ENCODE measurements at regions of chr1 and their contacts with region 1.

Region 1: GRCh38 chr1:173914366-173914871 is 2.7 kb downstream of the SERPINC1 start:
- DNase-seq: peak; percentile 69 to 71
- ATAC-seq: peak; percentile 85 to 94
- H3K4me3 ChIP-seq: no peak overlapping the region
- H3K27ac ChIP-seq: no peak overlapping the region
- H3K4me1 ChIP-seq: no peaks in the 10 kb centered on the region
- CTCF ChIP-seq: peak; percentile 65
- EP300 ChIP-seq: no peak
- POLR2A ChIP-seq: no peak
- RAD21 ChIP-seq: peak; percentile 23 to 54; a peak in 3 of 5 replicates

Region 2: GRCh38 chr1:173818459-173818858 is 96.0 kb before region 1 on chr1:
- CTCF ChIA-PET with region 1: no interaction called
- POLR2A ChIA-PET with region 1: no interaction called
- DNase-seq: no peak
- ATAC-seq: no peak
- H3K4me3 ChIP-seq: no peak overlapping the region
- H3K27ac ChIP-seq: no peak overlapping the region
- H3K4me1 ChIP-seq: peaks cover 8% of the 10 kb centered on the region; the same call in 1 of the 3 replicates
- CTCF ChIP-seq: no peak
- EP300 ChIP-seq: no peak
- POLR2A ChIP-seq: no peak
- RAD21 ChIP-seq: no peak

Region 3: DNA sequence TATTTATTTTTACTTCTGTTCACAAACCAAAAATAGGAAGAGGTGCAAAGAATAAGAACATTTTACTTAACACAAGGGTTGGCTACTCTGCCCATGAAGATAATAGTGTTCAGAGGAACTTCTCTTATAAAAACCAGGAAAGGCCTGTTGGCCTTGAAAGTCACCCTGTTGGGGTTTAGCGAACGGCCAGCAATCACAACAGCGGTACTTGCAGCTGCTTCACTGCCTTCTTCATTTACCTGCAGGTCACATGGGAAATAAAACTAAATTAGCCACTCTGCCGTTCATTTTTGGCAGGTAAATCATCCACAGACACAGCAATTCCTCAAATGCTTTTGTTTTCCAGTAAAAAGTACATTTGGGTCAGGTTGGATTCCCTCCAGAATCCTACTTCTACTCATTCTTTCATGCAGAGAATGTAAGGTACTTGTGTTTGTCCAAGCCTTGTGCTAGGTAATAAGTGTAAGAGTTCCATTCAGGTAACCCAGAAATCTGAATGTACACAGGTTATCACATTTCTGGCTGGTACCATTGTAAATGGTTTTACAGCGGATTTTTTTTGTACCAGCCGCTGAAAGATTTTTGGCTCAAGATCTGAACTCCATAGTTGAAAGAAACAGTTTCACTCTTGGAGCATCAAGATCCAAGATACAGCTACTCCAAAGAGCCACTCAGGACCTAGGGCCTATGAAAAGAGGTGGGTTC is 10.4 kb before region 1 on chr1:
- CTCF ChIA-PET with region 1: interaction called, 14 read pairs
- POLR2A ChIA-PET with region 1: no interaction called
- DNase-seq: no peak
- ATAC-seq: no peak
- H3K4me3 ChIP-seq: no peak overlapping the region
- H3K27ac ChIP-seq: no peak overlapping the region
- H3K4me1 ChIP-seq: no peaks in the 10 kb centered on the region
- CTCF ChIP-seq: no peak
- EP300 ChIP-seq: no peak
- POLR2A ChIP-seq: no peak
- RAD21 ChIP-seq: no peak

Region 4: DNA sequence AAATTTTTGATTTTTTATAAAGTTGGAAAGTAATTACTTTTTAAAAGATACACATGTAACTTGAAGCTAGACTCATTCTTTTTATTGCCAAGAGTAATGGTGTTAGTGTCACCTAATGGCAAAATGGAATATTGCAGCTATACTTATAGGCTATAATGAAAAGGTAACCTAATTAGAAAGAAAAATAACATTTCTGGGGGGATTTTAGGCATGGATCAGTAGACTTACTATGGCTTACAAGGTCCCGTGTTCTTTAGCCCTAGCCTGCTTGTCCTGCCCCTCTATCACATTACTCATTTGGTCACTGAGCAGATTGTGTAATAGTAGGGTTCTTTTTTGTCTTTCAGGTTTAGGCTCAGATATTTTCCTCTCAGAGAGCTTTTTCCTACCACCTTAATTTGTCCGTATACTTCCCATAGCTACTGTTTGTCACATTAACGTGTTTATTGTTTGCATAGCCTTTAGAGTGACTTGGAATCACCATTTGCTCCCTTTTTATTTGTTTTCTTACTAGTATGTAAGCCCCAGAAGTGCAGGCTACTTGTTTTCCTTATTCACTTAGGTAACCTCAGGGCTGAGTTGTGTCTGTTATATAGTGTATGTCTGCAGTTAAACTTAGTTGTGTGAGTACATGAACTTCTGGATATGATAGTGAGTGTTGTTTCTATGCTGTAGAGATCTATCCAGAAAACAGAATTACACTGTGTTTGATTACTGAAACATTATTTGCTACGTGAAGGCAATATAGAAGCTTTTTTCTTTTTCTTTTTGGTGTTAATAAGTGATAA is 303.6 kb after region 1 on chr1:
- CTCF ChIA-PET with region 1: no interaction called
- POLR2A ChIA-PET with region 1: no interaction called
- DNase-seq: peak; percentile 21 to 35
- ATAC-seq: peak; percentile 56 to 80; a peak in 3 of 6 replicates
- H3K4me3 ChIP-seq: no peak overlapping the region
- H3K27ac ChIP-seq: no peak overlapping the region
- H3K4me1 ChIP-seq: peaks cover 4% of the 10 kb centered on the region; the same call in 2 of the 3 replicates
- CTCF ChIP-seq: peak; percentile 84
- EP300 ChIP-seq: no peak
- POLR2A ChIP-seq: no peak
- RAD21 ChIP-seq: peak; percentile 80 to 86